K562 (cell line): ENCODE measurements at regions of chr14 and their contacts with region 1.

Region 1: DNA sequence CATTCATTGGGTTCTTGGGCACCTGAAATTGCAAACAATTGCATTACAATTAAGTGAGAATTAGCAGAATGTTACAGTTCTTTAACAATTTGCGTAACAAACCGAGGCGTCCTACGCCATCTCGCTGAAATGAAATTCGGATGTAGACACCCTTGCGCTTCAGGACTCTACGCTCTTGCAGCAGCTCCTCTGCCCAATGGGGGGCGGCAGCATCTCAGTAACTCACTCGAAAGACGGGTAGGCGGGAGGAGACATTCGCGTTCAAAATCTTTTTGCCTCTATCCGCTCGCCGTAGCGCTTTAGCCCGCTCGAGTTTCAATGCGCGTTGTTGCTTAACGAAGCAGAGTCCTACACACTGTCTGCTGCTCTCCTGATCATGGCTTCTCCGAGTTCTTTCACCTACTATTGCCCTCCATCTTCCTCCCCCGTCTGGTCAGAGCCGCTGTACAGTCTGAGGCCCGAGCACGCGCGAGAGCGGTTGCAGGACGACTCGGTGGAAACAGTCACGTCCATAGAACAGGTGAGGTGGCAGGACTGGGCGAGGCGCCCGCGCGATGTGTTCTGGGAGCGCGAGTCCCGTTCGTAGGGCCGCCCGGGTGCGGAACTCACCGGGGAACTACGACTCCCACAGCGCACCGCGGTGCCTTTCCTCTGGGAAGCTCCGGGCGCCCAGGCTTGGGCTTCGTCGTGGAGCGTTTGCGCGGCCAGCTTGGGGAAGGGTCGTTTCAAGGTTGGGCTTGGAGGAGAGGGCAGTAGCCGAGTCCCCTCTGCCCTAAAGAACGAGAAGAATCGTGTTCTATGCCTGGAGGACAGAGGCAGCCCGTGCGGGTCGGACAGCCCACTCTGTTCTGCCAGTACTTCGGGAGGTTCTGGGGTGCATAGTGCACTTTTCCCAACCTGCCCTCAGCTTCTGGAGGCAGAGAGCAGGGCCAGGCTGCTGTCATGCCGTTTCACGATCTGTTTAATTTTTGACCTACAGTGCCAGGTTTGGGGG is at the start of gene FNTB:
- DNase-seq: peak; percentile 86 to 93 (median 88)
- ATAC-seq: peak; percentile 99
- H3K4me3 ChIP-seq: peak within 1 kb of the TSS; percentile 67
- H3K27ac ChIP-seq: peak within 1 kb of the TSS; percentile 83
- H3K4me1 ChIP-seq: peaks cover 0 to 4% of the 10 kb centered on the region in 2 experiments; a peak in 3 of 5 replicates
- H3K27me3 ChIP-seq: no peaks in the 10 kb centered on the region; a peak in 1 of 5 replicates
- CTCF ChIP-seq: peak; percentile 82 to 94 (median 93)
- EP300 ChIP-seq: 0 out of 2 replicates have a peak, but pooled peaks have one; percentile 34
- POLR2A ChIP-seq: peak; percentile 84
- RAD21 ChIP-seq: peak; percentile 84 to 94
- polyA plus RNA-seq, gene FNTB: 14.1 to 23.2 TPM

Region 2: GRCh38 chr14:64899958-64900357 is 86.9 kb before region 1 on chr14:
- CTCF ChIA-PET with region 1: no interaction called
- POLR2A ChIA-PET with region 1: no interaction called
- in situ Hi-C with region 1: no loop called
- intact Hi-C with region 1: loop called (anchors 5 kb)
- DNase-seq: peak in 2 of 4 experiments; percentile 14 to 35
- ATAC-seq: no peak
- H3K4me3 ChIP-seq: no peak overlapping the region
- H3K27ac ChIP-seq: no peak overlapping the region
- H3K4me1 ChIP-seq: no peaks in the 10 kb centered on the region
- H3K27me3 ChIP-seq: peaks cover 4 to 5% of the 10 kb centered on the region in 2 experiments; a peak in 2 of 5 replicates
- CTCF ChIP-seq: no peak
- EP300 ChIP-seq: no peak
- POLR2A ChIP-seq: no peak
- RAD21 ChIP-seq: no peak

Region 3: DNA sequence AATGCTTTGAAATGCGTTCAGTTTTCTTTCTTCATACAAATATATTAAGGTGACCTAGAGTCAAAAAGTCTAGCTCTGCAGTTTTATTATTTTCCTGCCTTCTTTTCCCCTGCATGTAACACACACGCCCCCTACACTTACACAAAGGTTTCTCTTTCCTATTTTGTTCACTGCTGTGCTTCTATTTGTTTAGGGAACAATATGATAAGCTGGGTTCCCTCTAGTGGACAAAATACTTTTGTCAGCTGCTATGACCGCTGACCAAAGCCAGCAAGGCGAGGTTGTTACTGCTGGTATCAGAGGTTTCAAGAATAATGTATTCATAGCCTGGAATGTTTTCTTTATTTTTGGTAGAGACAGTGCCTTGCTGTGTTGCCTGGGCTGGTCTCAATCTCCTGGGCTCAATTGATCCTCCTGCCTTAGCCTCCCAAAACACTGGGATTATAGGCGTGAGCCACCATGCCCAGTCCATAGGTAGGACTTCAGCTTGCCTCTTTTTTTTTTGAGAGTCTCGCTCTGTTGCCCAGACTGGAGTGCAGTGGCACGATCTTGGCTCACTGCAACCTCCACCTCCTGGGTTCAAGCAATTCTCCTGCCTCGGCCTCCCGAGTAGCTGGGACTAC is 33.2 kb after region 1 on chr14:
- CTCF ChIA-PET with region 1: interaction called, 5 read pairs
- POLR2A ChIA-PET with region 1: interaction called, 6 read pairs
- in situ Hi-C with region 1: no loop called
- intact Hi-C with region 1: loop called (anchors 1 kb)
- DNase-seq: peak; percentile 27 to 74 (median 48)
- ATAC-seq: peak; percentile 100
- H3K4me3 ChIP-seq: no peak overlapping the region
- H3K27ac ChIP-seq: no peak overlapping the region
- H3K4me1 ChIP-seq: peaks cover 0 to 2% of the 10 kb centered on the region in 2 experiments; a peak in 2 of 5 replicates
- H3K27me3 ChIP-seq: no peaks in the 10 kb centered on the region
- CTCF ChIP-seq: peak; percentile 72 to 86 (median 80)
- EP300 ChIP-seq: 0 out of 2 replicates have a peak, but pooled peaks have one; percentile 8
- POLR2A ChIP-seq: no peak
- RAD21 ChIP-seq: peak; percentile 61 to 83

Region 4: DNA sequence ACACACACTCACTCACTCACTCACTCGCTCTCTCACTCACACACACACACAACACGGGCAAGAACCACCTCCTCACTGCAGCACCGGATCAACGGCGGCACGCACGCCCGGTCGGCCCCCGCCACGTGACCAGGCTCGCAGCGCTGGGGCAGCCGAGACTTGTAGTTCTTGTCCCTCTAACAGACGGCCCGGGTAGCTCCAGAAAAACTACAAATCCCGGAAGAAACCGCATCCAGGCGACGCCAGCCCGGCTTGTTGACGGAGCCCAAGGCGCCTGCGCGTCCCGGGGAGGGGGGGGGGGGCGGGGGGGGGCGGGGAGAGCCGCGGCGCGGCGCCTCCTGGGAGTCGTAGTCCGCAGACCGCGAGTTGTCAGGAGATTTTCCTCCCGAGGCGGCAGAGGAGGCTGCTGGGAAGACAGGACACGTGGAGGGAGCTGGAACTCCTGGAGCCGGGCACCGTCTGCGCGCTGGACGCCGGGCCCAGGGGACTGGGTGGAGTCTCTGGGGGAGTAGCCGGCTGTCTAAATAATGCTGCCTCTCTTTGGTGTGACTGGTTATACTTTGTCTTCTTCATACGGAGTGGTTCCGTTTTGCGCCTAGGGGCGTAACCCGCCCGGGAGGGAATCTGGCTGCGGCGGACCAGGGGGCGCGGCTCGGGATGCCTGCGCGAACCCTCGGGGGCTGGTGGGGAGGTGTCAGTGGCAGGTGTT is 115.7 kb after region 1 on chr14 and contains the start of gene MAX:
- CTCF ChIA-PET with region 1: no interaction called
- POLR2A ChIA-PET with region 1: no interaction called
- in situ Hi-C with region 1: no loop called
- intact Hi-C with region 1: loop called (anchors 2 kb)
- DNase-seq: peak; percentile 88 to 95 (median 91)
- ATAC-seq: peak; percentile 93
- H3K4me3 ChIP-seq: peak within 1 kb of the TSS; percentile 94
- H3K27ac ChIP-seq: peak within 1 kb of the TSS; percentile 81
- H3K4me1 ChIP-seq: peaks cover 17 to 25% of the 10 kb centered on the region in 2 experiments
- H3K27me3 ChIP-seq: no peaks in the 10 kb centered on the region
- CTCF ChIP-seq: no peak
- EP300 ChIP-seq: no peak
- POLR2A ChIP-seq: peak; percentile 63; the same call in 1 of the 2 replicates
- RAD21 ChIP-seq: no peak
- polyA plus RNA-seq, gene MAX: 15.4 to 32.7 TPM

Region 5: DNA sequence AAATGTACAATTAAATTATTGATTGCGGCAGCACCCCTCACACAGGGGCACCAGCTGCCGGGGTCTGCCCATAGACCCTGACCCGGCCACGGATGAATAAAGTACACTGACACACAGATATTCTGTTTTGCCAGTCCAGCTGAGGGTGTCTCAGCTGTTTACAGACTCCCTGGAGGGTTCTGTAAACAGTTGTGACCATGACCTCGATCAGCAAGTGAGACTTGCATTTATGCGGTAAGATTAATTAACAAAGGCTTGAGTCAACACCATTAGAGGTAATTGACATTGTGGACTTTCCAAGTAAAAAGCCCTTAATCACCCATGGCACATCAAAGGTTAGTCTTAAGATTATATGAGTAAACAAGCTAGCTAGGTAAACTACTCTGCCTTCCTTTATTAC is 519.9 kb after region 1 on chr14:
- CTCF ChIA-PET with region 1: no interaction called
- POLR2A ChIA-PET with region 1: no interaction called
- in situ Hi-C with region 1: no loop called
- intact Hi-C with region 1: no loop called
- DNase-seq: no peak
- ATAC-seq: no peak
- H3K4me3 ChIP-seq: no peak overlapping the region
- H3K27ac ChIP-seq: no peak overlapping the region
- H3K4me1 ChIP-seq: no peaks in the 10 kb centered on the region
- H3K27me3 ChIP-seq: no peaks in the 10 kb centered on the region
- CTCF ChIP-seq: no peak
- EP300 ChIP-seq: no peak
- POLR2A ChIP-seq: no peak
- RAD21 ChIP-seq: no peak